ENCODE measurements at regions of chr1 and their contacts with region 1.

Region 1: DNA sequence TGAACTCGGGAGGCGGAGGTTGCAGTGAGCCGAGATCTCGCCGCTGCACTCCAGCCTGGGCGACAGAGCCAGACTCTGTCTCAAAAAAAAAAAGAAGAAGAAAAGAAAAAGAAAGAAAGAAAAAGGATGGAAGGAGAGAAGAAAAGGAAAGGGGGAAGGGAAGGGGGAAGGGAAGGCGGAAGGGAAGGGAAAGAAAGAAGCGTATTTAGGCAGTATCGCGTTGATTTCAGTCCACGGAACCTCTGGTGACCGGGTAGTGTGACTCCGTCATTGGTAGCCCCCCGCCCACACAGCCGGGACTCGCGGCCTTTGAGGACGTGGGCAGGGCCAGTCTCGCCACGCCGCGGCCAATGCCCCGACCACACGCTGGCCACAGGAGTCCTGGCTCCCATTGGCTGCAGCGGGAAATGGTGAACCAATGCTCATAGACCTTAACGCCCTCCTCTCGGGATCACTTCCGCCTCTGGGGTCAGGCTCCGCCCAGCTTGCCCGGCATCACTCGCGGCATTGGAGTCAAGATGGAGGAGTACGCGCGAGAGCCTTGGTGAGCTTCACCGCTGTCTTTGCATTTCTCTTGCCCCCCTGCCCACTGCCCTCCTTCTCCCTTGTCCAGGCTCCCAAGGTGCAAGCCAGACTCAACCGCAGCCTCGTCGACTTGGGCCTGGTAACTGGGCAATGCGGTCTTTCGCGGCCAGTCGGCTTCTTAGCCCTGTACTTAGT is at the start of gene TIMM17A:
- DNase-seq: peak; percentile 93 to 96
- ATAC-seq: peak; percentile 97 to 99 (median 98)
- H3K4me3 ChIP-seq: peak within 1 kb of the TSS; percentile 96
- H3K4me3 Mint-ChIP-seq: peak within 1 kb of the TSS; percentile 85
- H3K27ac ChIP-seq: peak within 1 kb of the TSS; percentile 90
- H3K27ac Mint-ChIP-seq: peak within 1 kb of the TSS; percentile 89 to 93
- H3K4me1 ChIP-seq: peaks cover 14% of the 10 kb centered on the region
- H3K4me1 Mint-ChIP-seq: peaks cover 14 to 22% of the 10 kb centered on the region in 2 donors
- H3K27me3 ChIP-seq: no peaks in the 10 kb centered on the region
- H3K27me3 Mint-ChIP-seq: peaks cover 0 to 3% of the 10 kb centered on the region in 2 donors
- CTCF ChIP-seq: no peak
- total RNA-seq, gene TIMM17A: 48.7 to 53.9 (median 51.8) TPM

Region 2: GRCh38 chr1:201828820-201829774 is 126.1 kb before region 1 on chr1 and contains the start of gene IPO9:
- intact Hi-C with region 1: loop called (anchors 5 kb)
- DNase-seq: peak; percentile 96 to 98
- ATAC-seq: peak; percentile 95 to 98 (median 98)
- H3K4me3 ChIP-seq: peak within 1 kb of the TSS; percentile 98
- H3K4me3 Mint-ChIP-seq: peak within 1 kb of the TSS; percentile 100
- H3K27ac ChIP-seq: peak within 1 kb of the TSS; percentile 89
- H3K27ac Mint-ChIP-seq: peak within 1 kb of the TSS; percentile 93 to 98
- H3K4me1 ChIP-seq: peaks cover 13% of the 10 kb centered on the region
- H3K4me1 Mint-ChIP-seq: peaks cover 26 to 33% of the 10 kb centered on the region in 2 donors
- H3K27me3 ChIP-seq: no peaks in the 10 kb centered on the region
- H3K27me3 Mint-ChIP-seq: no peaks in the 10 kb centered on the region
- CTCF ChIP-seq: peak; percentile 97
- total RNA-seq, gene IPO9: 27.0 to 35.5 (median 34.6) TPM

Region 3: GRCh38 chr1:202348509-202349205 is 393.5 kb after region 1 on chr1 and contains the start of gene PPP1R12B:
- intact Hi-C with region 1: loop called (anchors 10 kb)
- DNase-seq: peak; percentile 90 to 97
- ATAC-seq: peak; percentile 96 to 99 (median 97)
- H3K4me3 ChIP-seq: peak within 1 kb of the TSS; percentile 98
- H3K4me3 Mint-ChIP-seq: peak within 1 kb of the TSS; percentile 99
- H3K27ac ChIP-seq: peak within 1 kb of the TSS; percentile 84
- H3K27ac Mint-ChIP-seq: peak within 1 kb of the TSS; percentile 92 to 96
- H3K4me1 ChIP-seq: peaks cover 10% of the 10 kb centered on the region
- H3K4me1 Mint-ChIP-seq: peaks cover 27 to 32% of the 10 kb centered on the region in 2 donors
- H3K27me3 ChIP-seq: no peaks in the 10 kb centered on the region
- H3K27me3 Mint-ChIP-seq: no peaks in the 10 kb centered on the region
- CTCF ChIP-seq: no peak
- total RNA-seq, gene PPP1R12B: 27.8 to 47.5 (median 46.5) TPM

Region 4: DNA sequence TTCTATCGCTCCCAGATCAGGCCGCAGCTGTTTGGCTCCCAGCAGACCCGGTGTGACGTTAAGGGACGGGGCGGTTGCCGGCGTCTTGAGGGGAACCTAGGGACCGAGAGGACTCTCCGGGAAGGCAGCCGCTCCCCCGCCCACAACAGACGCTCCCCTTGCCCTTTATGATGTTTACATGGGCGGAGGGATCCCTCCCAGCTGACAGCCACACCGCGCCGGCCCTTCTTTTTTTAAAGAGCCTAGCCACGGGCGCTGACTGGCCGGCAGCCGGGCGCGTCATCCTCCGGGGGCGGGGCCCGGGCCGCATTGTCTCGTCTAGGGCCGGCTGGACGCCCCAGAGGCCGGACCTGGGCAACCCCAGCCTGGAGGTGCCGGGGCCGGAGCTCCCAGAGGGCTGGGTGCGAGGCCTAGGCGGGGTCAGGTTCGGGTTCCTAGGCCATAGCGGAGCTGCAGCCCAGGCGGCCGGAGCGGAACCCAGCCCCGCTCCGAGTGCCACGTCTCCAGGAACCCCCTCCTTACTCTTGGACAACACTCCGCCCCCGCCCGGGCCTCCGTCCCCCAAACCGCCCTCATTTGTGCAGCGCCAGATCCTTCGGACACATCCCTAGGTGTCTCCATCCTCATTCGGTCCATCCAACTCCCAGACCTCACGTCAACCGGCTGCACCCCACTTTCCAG is 855.6 kb after region 1 on chr1 and contains the start of gene PCAT6:
- intact Hi-C with region 1: loop called (anchors 10 kb)
- DNase-seq: peak; percentile 86 to 92
- ATAC-seq: peak; percentile 80 to 91 (median 87)
- H3K4me3 ChIP-seq: peak within 1 kb of the TSS; percentile 66
- H3K4me3 Mint-ChIP-seq: peak within 1 kb of the TSS; percentile 84
- H3K27ac ChIP-seq: peak within 1 kb of the TSS; percentile 73
- H3K27ac Mint-ChIP-seq: peak within 1 kb of the TSS; percentile 82 to 90
- H3K4me1 ChIP-seq: peaks cover 22% of the 10 kb centered on the region
- H3K4me1 Mint-ChIP-seq: peaks cover 34 to 53% of the 10 kb centered on the region in 2 donors
- H3K27me3 ChIP-seq: no peaks in the 10 kb centered on the region
- H3K27me3 Mint-ChIP-seq: no peaks in the 10 kb centered on the region
- CTCF ChIP-seq: no peak
- total RNA-seq, gene PCAT6: 1.1 to 1.5 TPM in 2 of 3 donors, not detected in the other